ENCODE measurements at regions of chr11 and their contacts with region 1.

Region 1: GRCh38 chr11:73969991-73970800 is 12.4 kb downstream of the UCP2 start:
- DNase-seq: peak in 1 of 2 donors; percentile 40
- H3K4me3 ChIP-seq: no peak overlapping the region
- H3K27ac ChIP-seq: no peak overlapping the region
- H3K4me1 ChIP-seq: peaks cover 0 to 25% (median 18%) of the 10 kb centered on the region in 4 donors
- H3K27me3 ChIP-seq: no peaks in the 10 kb centered on the region
- CTCF ChIP-seq: no peak
- EP300 ChIP-seq: no peak
- POLR2A ChIP-seq: no peak

Region 2: GRCh38 chr11:73743045-73743444 is 227.2 kb before region 1 on chr11:
- intact Hi-C with region 1: no loop called
- DNase-seq: no peak
- H3K4me3 ChIP-seq: no peak overlapping the region
- H3K27ac ChIP-seq: no peak overlapping the region
- H3K4me1 ChIP-seq: peaks cover 0 to 53% (median 20%) of the 10 kb centered on the region in 4 donors
- H3K27me3 ChIP-seq: no peaks in the 10 kb centered on the region
- CTCF ChIP-seq: no peak
- EP300 ChIP-seq: no peak
- POLR2A ChIP-seq: no peak

Region 3: DNA sequence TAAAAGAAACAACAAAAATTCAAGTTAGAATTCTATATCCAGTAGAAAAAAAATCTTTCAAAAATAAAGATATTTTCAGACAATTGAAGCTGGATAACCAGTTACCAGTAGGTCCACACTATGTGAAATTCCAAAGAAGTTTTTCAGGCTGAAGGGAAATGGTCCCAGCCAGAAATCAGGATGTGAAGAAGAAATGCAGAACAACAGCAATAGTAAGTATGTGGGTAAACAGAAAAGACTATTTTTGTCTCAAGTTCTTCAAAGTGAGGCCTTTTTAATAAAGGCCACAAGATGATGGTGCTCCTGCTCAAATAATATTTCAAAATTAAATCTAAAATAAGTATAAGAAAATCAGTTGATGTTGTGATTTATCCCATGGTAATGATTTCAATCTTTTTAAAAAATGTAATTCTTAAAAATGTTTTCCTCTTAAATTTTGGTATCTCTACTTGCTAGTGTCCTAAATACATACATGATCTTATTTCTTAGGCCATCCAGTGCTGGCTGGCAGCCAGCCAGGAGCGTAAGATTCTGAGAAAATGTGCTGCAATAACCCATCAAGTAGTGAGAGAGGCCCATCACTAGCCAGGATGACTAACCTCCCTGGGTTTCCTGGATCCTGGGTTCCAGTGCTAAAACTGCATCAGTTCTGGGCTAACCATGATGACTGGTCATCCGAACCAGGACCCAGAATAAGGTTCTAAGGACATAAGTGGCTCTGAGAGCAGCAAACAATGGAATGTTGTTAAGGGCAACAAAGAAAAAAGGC is 54.2 kb after region 1 on chr11:
- intact Hi-C with region 1: loop called (anchors 10 kb)
- DNase-seq: peak; percentile 40 to 53
- H3K4me3 ChIP-seq: no peak overlapping the region
- H3K27ac ChIP-seq: peak overlapping the region in 2 of 5 donors; percentile 14 to 18
- H3K4me1 ChIP-seq: peaks cover 11 to 47% (median 16%) of the 10 kb centered on the region in 4 donors
- H3K27me3 ChIP-seq: no peaks in the 10 kb centered on the region
- CTCF ChIP-seq: no peak
- EP300 ChIP-seq: no peak
- POLR2A ChIP-seq: no peak

Region 4: DNA sequence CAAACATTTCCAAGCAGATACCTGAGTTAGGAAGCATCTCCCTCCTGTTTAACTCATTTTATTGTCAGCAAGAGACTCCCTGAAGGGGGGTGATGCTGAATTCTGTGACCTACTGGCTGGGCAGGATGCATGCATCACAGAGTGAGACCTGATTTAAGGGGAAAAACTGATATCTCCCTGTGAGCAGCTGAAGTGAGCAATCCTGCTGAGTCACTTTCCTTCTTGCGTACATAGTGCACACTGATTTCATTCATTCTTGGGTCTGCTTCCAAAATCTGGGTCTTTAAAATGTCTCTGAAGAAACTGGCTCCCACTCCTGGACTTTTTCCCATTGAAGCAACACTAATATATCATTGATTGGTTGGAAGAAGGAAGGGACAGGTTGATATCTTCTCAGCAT is 318.0 kb after region 1 on chr11:
- intact Hi-C with region 1: no loop called
- DNase-seq: peak in 1 of 2 donors; percentile 22
- H3K4me3 ChIP-seq: no peak overlapping the region
- H3K27ac ChIP-seq: no peak overlapping the region
- H3K4me1 ChIP-seq: peaks cover 0 to 17% (median 6%) of the 10 kb centered on the region in 4 donors
- H3K27me3 ChIP-seq: no peaks in the 10 kb centered on the region
- CTCF ChIP-seq: no peak
- EP300 ChIP-seq: no peak
- POLR2A ChIP-seq: no peak

Measured in stomach (tissue), 19 donors.